ENCODE measurements at regions of chr6 and their contacts with region 1.

Region 1: GRCh38 chr6:131627724-131628682 is at the start of gene MED23:
- DNase-seq: peak; percentile 93
- H3K4me3 Mint-ChIP-seq: peak within 1 kb of the TSS; percentile 98
- H3K27ac Mint-ChIP-seq: peak within 1 kb of the TSS; percentile 96
- H3K4me1 Mint-ChIP-seq: peaks cover 26% of the 10 kb centered on the region
- H3K27me3 Mint-ChIP-seq: no peaks in the 10 kb centered on the region
- total RNA-seq, gene MED23: 33.4 to 34.3 TPM

Region 2: GRCh38 chr6:131199568-131200272 is 428.3 kb before region 1 on chr6:
- CTCF ChIA-PET with region 1: interaction called, 17 read pairs
- POLR2A ChIA-PET with region 1: no interaction called
- DNase-seq: peak; percentile 85
- H3K4me3 Mint-ChIP-seq: peak overlapping the region; percentile 79
- H3K27ac Mint-ChIP-seq: peak overlapping the region; percentile 99
- H3K4me1 Mint-ChIP-seq: peaks cover 62% of the 10 kb centered on the region
- H3K27me3 Mint-ChIP-seq: no peaks in the 10 kb centered on the region

Region 3: GRCh38 chr6:131555992-131556391 is 72.0 kb before region 1 on chr6:
- CTCF ChIA-PET with region 1: no interaction called
- POLR2A ChIA-PET with region 1: no interaction called
- DNase-seq: no peak
- H3K4me3 Mint-ChIP-seq: no peak overlapping the region
- H3K27ac Mint-ChIP-seq: no peak overlapping the region
- H3K4me1 Mint-ChIP-seq: no peaks in the 10 kb centered on the region
- H3K27me3 Mint-ChIP-seq: no peaks in the 10 kb centered on the region

Region 4: GRCh38 chr6:131586543-131586942 is 41.5 kb before region 1 on chr6:
- CTCF ChIA-PET with region 1: interaction called, 11 read pairs
- POLR2A ChIA-PET with region 1: no interaction called
- DNase-seq: no peak
- H3K4me3 Mint-ChIP-seq: no peak overlapping the region
- H3K27ac Mint-ChIP-seq: no peak overlapping the region
- H3K4me1 Mint-ChIP-seq: no peaks in the 10 kb centered on the region
- H3K27me3 Mint-ChIP-seq: no peaks in the 10 kb centered on the region

Region 5: DNA sequence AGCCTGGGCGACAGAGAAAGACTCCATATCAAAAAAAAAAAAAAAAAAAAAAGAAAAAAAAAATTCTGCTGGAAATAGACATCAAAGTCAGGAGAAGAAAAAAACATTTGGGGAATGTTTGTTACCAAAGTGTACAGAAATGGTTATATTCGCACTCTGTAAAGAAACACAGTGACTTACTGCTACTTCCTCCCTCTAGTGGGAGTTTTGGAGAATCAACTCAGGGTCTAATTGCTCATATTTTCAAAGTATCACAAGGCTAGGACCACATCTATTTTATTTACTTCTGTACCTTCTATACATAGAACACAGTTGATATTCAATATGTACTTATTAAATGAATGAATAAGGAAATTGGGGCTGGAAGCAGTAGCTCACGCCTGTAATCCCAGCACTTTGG is 30.6 kb before region 1 on chr6:
- CTCF ChIA-PET with region 1: interaction called, 10 read pairs
- POLR2A ChIA-PET with region 1: no interaction called
- DNase-seq: no peak
- H3K4me3 Mint-ChIP-seq: no peak overlapping the region
- H3K27ac Mint-ChIP-seq: no peak overlapping the region
- H3K4me1 Mint-ChIP-seq: no peaks in the 10 kb centered on the region
- H3K27me3 Mint-ChIP-seq: no peaks in the 10 kb centered on the region

Region 6: DNA sequence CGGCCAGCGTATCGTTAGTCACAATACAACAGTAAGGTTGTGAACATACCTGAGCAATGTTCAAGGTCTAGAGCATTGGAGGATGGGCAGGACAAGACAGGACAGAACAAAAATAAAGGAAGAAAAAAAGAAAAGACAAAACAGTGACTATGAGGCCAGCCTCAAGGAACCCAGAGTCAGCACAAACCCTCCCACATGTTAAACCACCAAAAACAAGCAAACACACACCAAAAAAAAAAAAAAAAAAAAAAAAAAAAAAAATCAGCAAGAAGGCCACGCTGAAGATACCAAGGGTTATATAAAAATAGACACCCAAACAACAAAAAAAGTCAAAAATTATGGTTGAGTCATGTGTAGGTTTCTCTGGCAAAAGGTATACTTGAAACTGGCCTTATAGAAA is 12.7 kb before region 1 on chr6:
- CTCF ChIA-PET with region 1: interaction called, 26 read pairs
- POLR2A ChIA-PET with region 1: no interaction called
- DNase-seq: no peak
- H3K4me3 Mint-ChIP-seq: no peak overlapping the region
- H3K27ac Mint-ChIP-seq: no peak overlapping the region
- H3K4me1 Mint-ChIP-seq: peaks cover 2% of the 10 kb centered on the region
- H3K27me3 Mint-ChIP-seq: no peaks in the 10 kb centered on the region

Region 7: DNA sequence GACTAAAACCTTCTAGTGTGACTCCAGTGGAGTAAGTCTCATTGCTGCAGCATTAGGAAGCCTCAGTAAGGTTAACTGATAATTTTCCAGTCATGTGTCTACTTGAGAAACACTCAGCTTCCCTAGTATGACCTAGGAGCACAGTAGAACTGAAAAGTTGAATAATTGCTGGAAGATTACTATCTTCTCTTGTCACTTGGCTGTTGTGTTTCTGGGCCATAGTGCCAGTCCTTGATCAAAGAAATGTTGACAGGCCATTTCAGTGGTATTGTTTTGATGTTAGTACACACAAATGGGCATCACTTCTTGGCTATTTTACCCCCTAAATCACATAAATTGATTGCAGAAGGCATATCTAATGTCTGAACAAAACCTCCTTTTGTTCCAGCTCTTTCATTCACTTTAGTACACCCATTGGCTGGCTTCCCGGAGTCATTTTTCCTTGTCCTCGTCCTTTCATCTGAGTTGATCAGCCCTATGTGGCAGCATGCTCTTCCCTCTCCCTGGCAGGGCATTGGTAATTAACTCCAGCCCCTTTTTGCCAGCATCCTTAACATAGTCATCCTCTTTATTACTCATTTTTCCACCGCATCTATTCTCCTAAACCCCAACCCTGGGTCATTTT is 15.1 kb after region 1 on chr6:
- CTCF ChIA-PET with region 1: interaction called, 44 read pairs
- POLR2A ChIA-PET with region 1: no interaction called
- DNase-seq: no peak
- H3K4me3 Mint-ChIP-seq: no peak overlapping the region
- H3K27ac Mint-ChIP-seq: no peak overlapping the region
- H3K4me1 Mint-ChIP-seq: peaks cover 1% of the 10 kb centered on the region
- H3K27me3 Mint-ChIP-seq: no peaks in the 10 kb centered on the region